ENCODE measurements at regions of chr18 and their contacts with region 1.

Region 1: GRCh38 chr18:61502472-61502871 is 169.2 kb downstream of the CDH20 start:
- DNase-seq: no peak
- ATAC-seq: peak in 1 of 2 donors; percentile 74
- H3K4me3 ChIP-seq: no peak overlapping the region
- H3K27ac ChIP-seq: no peak overlapping the region
- H3K4me1 ChIP-seq: no peaks in the 10 kb centered on the region
- H3K27me3 ChIP-seq: no peaks in the 10 kb centered on the region

Region 2: DNA sequence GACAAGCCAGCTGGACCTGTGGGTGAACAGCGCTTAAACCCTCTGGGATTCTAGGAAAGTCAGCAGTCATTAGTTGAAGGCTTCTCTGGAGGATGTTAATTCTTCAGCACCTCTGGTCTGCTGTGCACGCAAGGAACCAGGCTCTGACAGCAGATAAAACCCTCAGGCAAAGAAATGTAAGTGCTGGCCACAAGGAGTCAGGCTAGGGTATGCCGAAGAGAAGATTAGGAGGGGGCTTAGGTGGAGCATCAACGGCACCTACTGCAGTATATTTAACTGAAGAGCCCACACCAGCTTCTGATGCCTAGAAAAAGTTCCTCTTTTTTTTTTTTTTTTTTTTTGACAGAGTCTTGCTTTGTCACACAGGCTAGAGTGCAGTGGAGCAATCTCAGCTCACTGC is 825.7 kb before region 1 on chr18:
- intact Hi-C with region 1: loop called in 3 of 4 experiments (anchors 10 kb)
- DNase-seq: no peak
- ATAC-seq: no peak
- H3K4me3 ChIP-seq: no peak overlapping the region
- H3K27ac ChIP-seq: no peak overlapping the region
- H3K4me1 ChIP-seq: no peaks in the 10 kb centered on the region
- H3K27me3 ChIP-seq: no peaks in the 10 kb centered on the region

Region 3: GRCh38 chr18:60684843-60685513 is 817.5 kb before region 1 on chr18:
- intact Hi-C with region 1: loop called in 2 of 4 experiments (anchors 10 kb)
- DNase-seq: no peak
- ATAC-seq: no peak
- H3K4me3 ChIP-seq: no peak overlapping the region
- H3K27ac ChIP-seq: no peak overlapping the region
- H3K4me1 ChIP-seq: no peaks in the 10 kb centered on the region
- H3K27me3 ChIP-seq: no peaks in the 10 kb centered on the region

Region 4: GRCh38 chr18:60809937-60810336 is 692.5 kb before region 1 on chr18:
- intact Hi-C with region 1: loop called in 1 of 4 experiments (anchors 10 kb)
- DNase-seq: no peak
- ATAC-seq: no peak
- H3K4me3 ChIP-seq: no peak overlapping the region
- H3K27ac ChIP-seq: no peak overlapping the region
- H3K4me1 ChIP-seq: no peaks in the 10 kb centered on the region
- H3K27me3 ChIP-seq: no peaks in the 10 kb centered on the region

Region 5: DNA sequence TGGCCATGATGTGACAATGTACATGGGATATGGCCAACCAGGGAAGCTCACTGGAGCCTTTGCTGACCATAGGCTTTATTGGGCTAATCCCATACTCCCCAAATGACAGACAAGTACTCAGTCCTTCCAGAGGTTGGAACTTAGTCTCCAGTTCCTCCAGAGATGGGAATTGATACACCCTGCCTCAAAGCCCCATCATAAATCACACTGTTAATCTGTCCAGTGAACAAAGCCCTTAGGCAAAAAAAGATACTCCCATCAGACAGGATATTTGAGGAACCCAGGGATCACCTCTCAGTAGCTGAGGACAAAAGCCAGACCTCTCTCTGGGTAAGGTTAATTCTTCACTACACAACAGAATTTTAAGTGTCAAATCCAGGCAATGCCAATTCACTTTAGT is 416.7 kb before region 1 on chr18:
- intact Hi-C with region 1: loop called in 1 of 4 experiments (anchors 5 kb)
- DNase-seq: no peak
- ATAC-seq: no peak
- H3K4me3 ChIP-seq: no peak overlapping the region
- H3K27ac ChIP-seq: no peak overlapping the region
- H3K4me1 ChIP-seq: no peaks in the 10 kb centered on the region
- H3K27me3 ChIP-seq: no peaks in the 10 kb centered on the region

Region 6: GRCh38 chr18:61322265-61322873 is 180.1 kb before region 1 on chr18:
- intact Hi-C with region 1: loop called in 2 of 4 experiments (anchors 5 kb)
- DNase-seq: peak; percentile 42 to 82 (median 77)
- ATAC-seq: peak; percentile 67 to 74
- H3K4me3 ChIP-seq: no peak overlapping the region
- H3K27ac ChIP-seq: no peak overlapping the region
- H3K4me1 ChIP-seq: no peaks in the 10 kb centered on the region
- H3K27me3 ChIP-seq: no peaks in the 10 kb centered on the region

Region 7: DNA sequence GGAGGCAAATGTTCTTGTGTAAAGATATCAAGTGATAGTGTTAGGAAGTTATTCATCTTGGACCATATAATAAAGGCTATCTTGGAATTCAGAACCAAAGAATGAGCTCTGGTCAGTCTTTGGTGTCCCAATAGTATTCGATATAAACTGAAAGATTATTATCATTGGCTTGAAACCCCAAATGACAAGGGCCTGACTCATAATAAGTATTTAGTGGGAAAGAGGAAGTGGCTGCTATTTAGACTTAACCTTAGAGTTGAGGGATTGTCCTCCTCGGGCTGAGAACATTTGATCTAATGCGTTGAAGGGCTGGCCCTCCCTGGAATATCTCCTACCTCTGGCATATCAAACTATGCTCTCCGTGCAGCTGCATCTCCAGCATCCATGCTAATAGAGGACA is 101.8 kb before region 1 on chr18:
- intact Hi-C with region 1: no loop called
- DNase-seq: no peak
- ATAC-seq: no peak
- H3K4me3 ChIP-seq: no peak overlapping the region
- H3K27ac ChIP-seq: no peak overlapping the region
- H3K4me1 ChIP-seq: no peaks in the 10 kb centered on the region
- H3K27me3 ChIP-seq: no peaks in the 10 kb centered on the region

Region 8: DNA sequence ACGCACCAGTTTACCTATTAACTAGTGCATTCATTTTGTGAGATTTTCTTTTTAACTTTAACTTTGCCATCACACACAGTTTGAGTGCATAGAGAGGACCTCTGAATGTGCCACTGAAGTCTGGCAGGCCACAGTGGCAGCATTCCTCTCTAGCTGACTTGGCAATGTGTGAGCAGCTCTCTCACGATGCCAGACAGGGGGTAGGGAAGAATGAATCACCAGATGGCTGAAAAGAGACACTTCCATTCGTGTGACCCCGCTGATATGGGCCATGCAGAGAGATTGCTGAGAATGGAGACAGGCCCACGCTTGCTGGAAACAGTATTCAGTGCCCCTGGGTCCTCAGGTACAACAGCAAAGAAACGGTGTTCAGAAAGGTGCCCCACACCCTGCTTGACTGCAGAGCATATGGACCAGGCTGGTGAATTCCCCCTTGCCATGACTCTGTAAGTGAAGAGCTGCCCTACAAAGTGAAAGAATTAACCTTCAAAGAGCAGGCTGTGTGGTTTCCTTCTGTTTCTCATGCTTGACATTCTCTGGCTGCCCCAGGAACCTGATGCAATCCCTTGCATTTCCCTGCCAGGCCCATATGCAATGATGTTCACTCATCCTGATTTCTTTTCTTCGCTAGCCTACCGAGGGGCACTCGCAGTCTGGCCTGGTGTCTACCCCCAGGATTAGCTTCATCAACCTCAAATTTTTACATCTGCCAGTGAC is 66.9 kb after region 1 on chr18:
- intact Hi-C with region 1: no loop called
- DNase-seq: peak; percentile 39 to 76 (median 65)
- ATAC-seq: peak; percentile 96 to 97
- H3K4me3 ChIP-seq: no peak overlapping the region
- H3K27ac ChIP-seq: peak overlapping the region; percentile 49
- H3K4me1 ChIP-seq: no peaks in the 10 kb centered on the region
- H3K27me3 ChIP-seq: no peaks in the 10 kb centered on the region

Region 9: DNA sequence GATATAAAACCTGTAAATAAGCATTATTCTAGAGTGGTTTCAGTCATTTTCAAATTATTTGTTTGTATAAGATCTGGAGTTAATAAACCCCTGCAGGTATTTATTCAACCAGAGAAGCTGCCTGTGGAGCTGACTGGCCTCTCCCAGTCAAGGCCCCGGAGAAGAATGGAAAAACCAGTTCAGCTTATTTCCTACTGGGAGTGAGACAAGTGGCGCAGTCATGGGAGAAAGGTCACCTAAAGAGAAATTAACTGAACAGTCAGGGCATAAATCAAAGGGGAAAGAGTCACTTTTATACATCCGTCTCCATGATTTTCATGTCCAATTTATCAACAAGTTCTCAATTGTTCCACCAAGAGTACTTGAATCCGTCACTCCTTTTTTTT is 149.4 kb after region 1 on chr18:
- intact Hi-C with region 1: no loop called
- DNase-seq: no peak
- ATAC-seq: no peak
- H3K4me3 ChIP-seq: no peak overlapping the region
- H3K27ac ChIP-seq: no peak overlapping the region
- H3K4me1 ChIP-seq: no peaks in the 10 kb centered on the region
- H3K27me3 ChIP-seq: no peaks in the 10 kb centered on the region

Measured in right cardiac atrium (tissue), 5 donors.